ENCODE measurements at regions of chr15 and their contacts with region 1.

Region 1: GRCh38 chr15:68672781-68673205 is 94.0 kb downstream of the CORO2B start:
- DNase-seq: no peak
- H3K4me3 ChIP-seq: no peak overlapping the region
- H3K27ac ChIP-seq: no peak overlapping the region
- H3K4me1 ChIP-seq: no peaks in the 10 kb centered on the region
- H3K27me3 ChIP-seq: peaks cover 10% of the 10 kb centered on the region
- CTCF ChIP-seq: no peak
- EP300 ChIP-seq: no peak
- POLR2A ChIP-seq: no peak

Region 2: DNA sequence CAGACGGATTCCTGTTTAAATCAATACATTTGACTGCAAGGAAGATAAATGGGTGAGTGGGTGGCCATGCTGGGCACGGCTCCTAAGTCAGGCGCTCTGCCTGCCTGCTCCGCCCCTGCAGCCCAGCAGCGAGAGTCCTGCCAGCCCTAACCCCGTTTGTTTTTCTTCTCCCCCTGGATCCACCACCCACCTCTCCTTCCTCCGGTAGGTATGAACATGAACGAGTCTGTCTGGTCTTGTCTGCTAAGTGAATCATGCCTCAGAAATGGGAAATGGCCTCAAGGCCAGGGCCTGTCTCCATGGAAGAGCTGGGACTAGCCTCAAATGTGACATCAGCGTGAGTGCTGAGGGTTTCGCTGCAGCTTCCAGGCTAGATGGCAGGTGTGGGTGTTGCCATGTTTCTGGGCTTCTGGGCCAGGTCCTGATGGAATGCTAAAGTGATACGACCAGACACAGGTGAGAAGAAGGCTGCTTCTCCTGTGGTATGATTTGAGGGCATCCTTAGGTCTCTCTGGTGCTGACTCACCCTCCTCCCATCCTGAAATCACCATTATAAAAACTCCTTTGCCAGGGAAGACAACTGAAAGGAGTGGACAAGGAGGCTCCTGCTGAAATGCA is 400.8 kb before region 1 on chr15:
- in situ Hi-C with region 1: no loop called
- intact Hi-C with region 1: no loop called
- DNase-seq: no peak
- H3K4me3 ChIP-seq: no peak overlapping the region
- H3K27ac ChIP-seq: peak overlapping the region; percentile 23 to 72 (median 66)
- H3K4me1 ChIP-seq: peaks cover 9 to 14% (median 11%) of the 10 kb centered on the region in 4 donors
- H3K27me3 ChIP-seq: no peaks in the 10 kb centered on the region
- CTCF ChIP-seq: no peak
- EP300 ChIP-seq: no peak
- POLR2A ChIP-seq: no peak

Region 3: GRCh38 chr15:68316061-68316804 is 356.6 kb before region 1 on chr15:
- in situ Hi-C with region 1: loop called in 2 of 4 experiments (anchors 25 kb)
- intact Hi-C with region 1: no loop called
- DNase-seq: no peak
- H3K4me3 ChIP-seq: no peak overlapping the region
- H3K27ac ChIP-seq: no peak overlapping the region
- H3K4me1 ChIP-seq: no peaks in the 10 kb centered on the region
- H3K27me3 ChIP-seq: no peaks in the 10 kb centered on the region
- CTCF ChIP-seq: peak in 2 of 5 experiments; percentile 18 to 19
- EP300 ChIP-seq: no peak
- POLR2A ChIP-seq: no peak

Region 4: GRCh38 chr15:68550481-68551295 is 122.1 kb before region 1 on chr15:
- in situ Hi-C with region 1: loop called (anchors 5 to 10 kb)
- intact Hi-C with region 1: loop called (anchors 2 kb)
- DNase-seq: peak; percentile 78
- H3K4me3 ChIP-seq: no peak overlapping the region
- H3K27ac ChIP-seq: no peak overlapping the region
- H3K4me1 ChIP-seq: no peaks in the 10 kb centered on the region
- H3K27me3 ChIP-seq: peaks cover 11% of the 10 kb centered on the region
- CTCF ChIP-seq: peak; percentile 79 to 94 (median 90)
- EP300 ChIP-seq: no peak
- POLR2A ChIP-seq: no peak

Region 5: GRCh38 chr15:68559345-68560310 is 113.2 kb before region 1 on chr15:
- in situ Hi-C with region 1: loop called (anchors 5 to 10 kb)
- intact Hi-C with region 1: loop called (anchors 2 kb)
- DNase-seq: peak; percentile 66
- H3K4me3 ChIP-seq: peak overlapping the region in 3 of 4 donors; percentile 17 to 37 (median 22)
- H3K27ac ChIP-seq: no peak overlapping the region
- H3K4me1 ChIP-seq: peaks cover 0 to 15% (median 13%) of the 10 kb centered on the region in 4 donors
- H3K27me3 ChIP-seq: peaks cover 40% of the 10 kb centered on the region
- CTCF ChIP-seq: peak; percentile 90 to 97 (median 96)
- EP300 ChIP-seq: no peak
- POLR2A ChIP-seq: no peak

Region 6: DNA sequence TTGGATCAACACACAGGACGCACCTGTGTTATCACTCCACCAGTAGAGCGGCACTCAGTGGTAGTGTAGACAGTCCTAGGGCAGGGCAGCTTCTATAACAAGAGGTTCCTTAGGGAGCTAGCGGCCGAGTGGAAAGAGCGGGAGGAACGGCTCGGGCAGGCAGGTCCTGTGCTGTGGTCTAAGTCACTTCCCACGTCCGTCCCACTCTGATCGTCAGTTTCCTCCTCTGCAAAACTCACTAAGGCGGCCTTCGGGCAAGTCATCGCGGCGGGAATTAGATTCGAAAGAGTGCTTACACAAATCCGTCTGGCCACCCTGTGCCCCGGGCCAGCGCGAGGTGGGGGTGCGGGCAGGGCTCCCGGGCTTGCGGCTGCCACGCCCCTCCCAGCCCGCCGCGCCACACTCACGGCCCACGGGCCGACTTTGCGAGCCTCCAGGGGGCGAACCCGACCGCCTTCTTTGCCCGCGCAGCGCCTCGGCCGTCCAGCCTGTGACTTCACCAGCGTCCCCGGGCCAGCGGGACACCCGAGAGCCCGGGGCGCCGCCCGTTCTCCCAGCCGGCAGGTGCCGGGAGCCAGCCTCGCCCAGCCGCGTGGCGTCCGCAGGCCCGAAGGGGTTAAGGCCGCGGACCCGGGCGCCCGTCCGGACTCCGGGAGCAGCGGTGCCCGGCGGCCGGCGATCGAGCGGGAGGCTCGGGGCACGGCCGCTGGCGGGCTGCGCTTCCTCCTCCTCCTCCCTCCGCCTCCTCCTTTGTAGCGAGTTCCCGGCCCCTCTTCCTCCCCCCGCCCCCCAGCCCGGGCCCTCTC is 94.4 kb before region 1 on chr15:
- in situ Hi-C with region 1: no loop called
- intact Hi-C with region 1: loop called (anchors 1 kb)
- DNase-seq: peak; percentile 55
- H3K4me3 ChIP-seq: peak overlapping the region; percentile 28 to 57 (median 46)
- H3K27ac ChIP-seq: peak overlapping the region; percentile 39 to 64 (median 51)
- H3K4me1 ChIP-seq: peaks cover 0 to 17% (median 12%) of the 10 kb centered on the region in 4 donors
- H3K27me3 ChIP-seq: peaks cover 70% of the 10 kb centered on the region
- CTCF ChIP-seq: peak in 3 of 5 experiments; percentile 16 to 36 (median 23)
- EP300 ChIP-seq: no peak
- POLR2A ChIP-seq: no peak

Region 7: DNA sequence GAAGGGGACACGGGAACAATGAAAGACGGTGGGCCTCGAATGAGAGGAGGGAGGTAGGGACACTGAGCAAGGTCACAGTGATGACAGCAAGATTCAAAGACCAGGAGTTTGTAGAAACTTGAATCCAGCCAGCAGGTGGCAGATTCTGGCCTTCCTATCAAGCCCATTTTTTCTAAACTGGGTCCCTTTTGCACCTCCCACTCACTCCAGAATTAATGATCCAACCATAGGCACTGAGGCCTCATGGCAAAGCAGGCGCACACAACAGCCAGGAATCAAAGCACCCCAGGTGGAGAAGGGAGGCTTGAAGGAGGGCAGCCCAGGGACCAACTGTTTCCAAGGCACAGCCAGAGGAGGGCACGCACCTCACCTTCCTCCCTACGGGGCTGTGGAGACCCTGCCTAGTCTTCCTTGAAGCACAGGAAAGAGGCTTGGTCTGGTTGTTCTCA is 57.7 kb after region 1 on chr15:
- in situ Hi-C with region 1: no loop called
- intact Hi-C with region 1: no loop called
- DNase-seq: peak; percentile 46
- H3K4me3 ChIP-seq: no peak overlapping the region
- H3K27ac ChIP-seq: peak overlapping the region in 2 of 4 donors; percentile 22 to 55
- H3K4me1 ChIP-seq: peaks cover 0 to 18% (median 9%) of the 10 kb centered on the region in 4 donors
- H3K27me3 ChIP-seq: no peaks in the 10 kb centered on the region
- CTCF ChIP-seq: peak; percentile 47 to 72 (median 52)
- EP300 ChIP-seq: no peak
- POLR2A ChIP-seq: no peak

Measured in transverse colon (tissue), 4 donors.